GM10248 (cell line): ENCODE measurements at regions of chr5 and their contacts with region 1.

Region 1: DNA sequence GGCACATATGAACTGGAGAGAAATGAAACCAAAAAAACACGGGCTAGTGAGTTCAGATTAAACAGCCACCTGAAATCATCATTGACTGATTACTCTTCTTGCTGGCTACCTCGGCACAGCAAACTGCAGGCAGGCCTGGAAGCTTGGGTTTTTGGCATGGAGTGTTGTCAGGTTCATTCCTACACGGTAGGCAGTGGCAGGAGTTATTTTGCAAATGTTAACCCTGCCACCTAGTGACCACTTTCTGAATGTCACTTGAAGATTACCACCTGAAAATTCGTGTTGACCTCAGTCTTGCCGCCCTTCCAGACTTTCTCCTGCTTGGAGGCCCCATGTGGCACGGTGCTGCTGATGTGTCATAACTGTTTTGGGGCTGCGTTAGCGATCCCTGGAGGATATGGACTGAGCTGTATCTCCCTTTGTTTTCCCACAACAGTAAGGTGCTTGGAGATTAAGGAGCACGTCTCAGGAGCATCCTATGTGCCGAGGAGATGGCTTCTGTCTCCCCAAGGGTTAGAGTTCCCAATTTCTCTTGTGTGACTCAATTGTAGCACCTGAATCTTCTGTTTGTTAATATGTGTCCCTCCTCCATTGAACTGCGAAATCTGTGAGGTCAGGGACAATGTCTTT is 12.7 kb upstream of the CD180 start:
- DNase-seq: peak; percentile 69
- CTCF ChIP-seq: peak; percentile 68

Region 2: DNA sequence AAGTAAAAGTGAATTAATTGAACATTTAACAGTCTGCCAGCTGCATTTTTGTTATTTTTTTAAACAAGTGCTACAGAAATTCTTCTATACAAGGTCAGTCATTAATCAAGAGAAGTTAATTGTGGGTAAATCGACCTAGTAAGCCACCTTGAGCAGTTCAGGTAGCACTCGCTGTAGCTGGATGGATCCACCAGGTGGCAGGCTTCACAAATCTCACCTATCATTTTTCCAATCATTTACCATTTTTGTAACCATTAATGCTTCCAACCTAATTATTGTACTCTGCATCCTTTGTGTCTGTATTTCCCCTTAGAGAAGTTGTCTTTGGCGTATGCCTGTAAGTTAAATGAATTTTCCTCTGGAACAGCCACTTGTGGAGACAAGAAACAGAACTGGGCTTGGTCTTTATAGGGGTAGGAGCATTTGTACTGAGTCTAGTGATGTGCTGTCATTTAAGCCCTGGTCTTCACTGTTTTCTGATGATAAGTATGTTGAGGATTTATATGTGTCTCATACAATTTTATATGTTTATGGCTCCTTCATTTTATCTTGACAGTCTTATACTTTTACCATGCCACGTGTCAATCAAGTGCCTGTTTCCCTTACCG is 52.2 kb before region 1 on chr5:
- CTCF ChIA-PET with region 1: interaction called, 311 read pairs
- POLR2A ChIA-PET with region 1: interaction called, 4 read pairs
- DNase-seq: peak; percentile 62
- CTCF ChIP-seq: peak; percentile 73

Region 3: GRCh38 chr5:67196537-67197059 is 12.7 kb before region 1 on chr5 and contains the start of gene CD180:
- CTCF ChIA-PET with region 1: interaction called, 12 read pairs
- POLR2A ChIA-PET with region 1: no interaction called
- DNase-seq: no peak
- CTCF ChIP-seq: no peak